ENCODE measurements at regions of chr4 and their contacts with region 1.

Region 1: GRCh38 chr4:781493-782216 is 44.3 kb downstream of the CPLX1 start:
- DNase-seq: peak; percentile 96 to 99 (median 98)
- ATAC-seq: peak; percentile 96
- H3K4me3 ChIP-seq: peak overlapping the region; percentile 83
- H3K4me3 Mint-ChIP-seq: peak overlapping the region; percentile 84 to 97 (median 90)
- H3K27ac ChIP-seq: peak overlapping the region; percentile 90
- H3K27ac Mint-ChIP-seq: peak overlapping the region; percentile 81 to 98 (median 95)
- H3K4me1 ChIP-seq: peaks cover 29% of the 10 kb centered on the region in 2 donors
- H3K4me1 Mint-ChIP-seq: peaks cover 42 to 62% (median 47%) of the 10 kb centered on the region in 7 donors
- H3K27me3 ChIP-seq: peaks cover 0 to 6% of the 10 kb centered on the region in 2 donors
- H3K27me3 Mint-ChIP-seq: peaks cover 10 to 22% (median 16%) of the 10 kb centered on the region in 5 donors

Region 2: GRCh38 chr4:337143-337931 is 444.3 kb before region 1 on chr4 and contains the start of gene ZNF141:
- CTCF ChIA-PET with region 1: no interaction called
- POLR2A ChIA-PET with region 1: no interaction called
- intact Hi-C with region 1: loop called (anchors 1 to 5 kb)
- DNase-seq: peak; percentile 74 to 95 (median 93)
- ATAC-seq: peak; percentile 93
- H3K4me3 ChIP-seq: peak within 1 kb of the TSS; percentile 91
- H3K4me3 Mint-ChIP-seq: peak within 1 kb of the TSS; percentile 93 to 100 (median 99)
- H3K27ac ChIP-seq: peak within 1 kb of the TSS; percentile 85
- H3K27ac Mint-ChIP-seq: peak within 1 kb of the TSS; percentile 95 to 100 (median 99)
- H3K4me1 ChIP-seq: peaks cover 9 to 10% of the 10 kb centered on the region in 2 donors
- H3K4me1 Mint-ChIP-seq: peaks cover 11 to 46% (median 41%) of the 10 kb centered on the region in 7 donors
- H3K27me3 ChIP-seq: no peaks in the 10 kb centered on the region
- H3K27me3 Mint-ChIP-seq: peaks cover 0 to 6% (median 0%) of the 10 kb centered on the region in 5 donors
- total RNA-seq, gene ZNF141: 19.7 to 76.1 (median 29.0) TPM

Region 3: DNA sequence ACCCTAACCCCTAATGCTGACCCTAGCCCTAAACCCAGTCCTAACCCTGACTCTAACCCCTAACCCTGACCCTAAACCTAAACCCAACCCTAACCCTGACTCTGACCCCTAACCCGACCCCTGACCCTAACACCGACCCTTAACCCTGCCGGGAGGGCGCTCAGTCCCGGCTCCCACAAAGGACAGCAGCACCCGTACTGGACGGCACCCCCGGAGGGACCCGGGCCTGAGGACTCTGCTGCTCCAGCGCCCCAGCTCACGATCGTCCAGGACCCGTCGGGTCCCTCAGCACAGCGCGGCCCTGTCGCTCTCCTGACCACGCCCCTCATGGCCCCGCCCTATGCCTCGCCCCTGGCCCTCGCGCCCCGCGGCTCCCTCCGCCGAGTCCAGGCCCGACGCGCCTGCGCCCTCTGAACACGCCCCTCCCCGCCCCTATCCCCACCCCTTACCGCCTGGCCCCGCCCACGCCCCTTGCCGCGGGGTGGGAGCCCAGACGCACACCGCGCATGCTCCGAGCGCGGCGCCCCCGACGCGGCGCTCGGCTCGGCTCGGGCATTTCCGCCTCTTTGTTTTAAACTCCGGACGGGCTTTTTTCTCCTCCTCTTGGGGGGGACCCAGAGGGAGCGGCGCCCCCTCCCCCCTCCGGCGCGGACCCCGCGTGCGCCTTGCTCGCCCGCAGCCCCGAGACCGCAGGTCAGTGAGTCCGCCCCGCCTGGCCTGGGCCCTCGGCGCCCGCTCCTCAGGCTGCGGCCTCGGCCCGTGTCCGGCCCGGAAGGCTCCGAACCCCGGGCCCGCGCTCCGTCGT is 76.2 kb before region 1 on chr4 and contains the start of gene PCGF3:
- CTCF ChIA-PET with region 1: no interaction called
- POLR2A ChIA-PET with region 1: interaction called, 3 read pairs
- intact Hi-C with region 1: loop called (anchors 1 kb)
- DNase-seq: peak; percentile 89 to 99 (median 92)
- ATAC-seq: peak; percentile 99
- H3K4me3 ChIP-seq: peak within 1 kb of the TSS; percentile 84
- H3K4me3 Mint-ChIP-seq: peak within 1 kb of the TSS; percentile 68 to 96 (median 83)
- H3K27ac ChIP-seq: peak within 1 kb of the TSS; percentile 96
- H3K27ac Mint-ChIP-seq: peak within 1 kb of the TSS; percentile 40 to 93 (median 59)
- H3K4me1 ChIP-seq: peaks cover 9 to 11% of the 10 kb centered on the region in 2 donors
- H3K4me1 Mint-ChIP-seq: peaks cover 21 to 30% (median 23%) of the 10 kb centered on the region in 7 donors
- H3K27me3 ChIP-seq: no peaks in the 10 kb centered on the region
- H3K27me3 Mint-ChIP-seq: no peaks in the 10 kb centered on the region
- total RNA-seq, gene PCGF3: 32.7 to 66.8 (median 42.3) TPM

Region 4: DNA sequence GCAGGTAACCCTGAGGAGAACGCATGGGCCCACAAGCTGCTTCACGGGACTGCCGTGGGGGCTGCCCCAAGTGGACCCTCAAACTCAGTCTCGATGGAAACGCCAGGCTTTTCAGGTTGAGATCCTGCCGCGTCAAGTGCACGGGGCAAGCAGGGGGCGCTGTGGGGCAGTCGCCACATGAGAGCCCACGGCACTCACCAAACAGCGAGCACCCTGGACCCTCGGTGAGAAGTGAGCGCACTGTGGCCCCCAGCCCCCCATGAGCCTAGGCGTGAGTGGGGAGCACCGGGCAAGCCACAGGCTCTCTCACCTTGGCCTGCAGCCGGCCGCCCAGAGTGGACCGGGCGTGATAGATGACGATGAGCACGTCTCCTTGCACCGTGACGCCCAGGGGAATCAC is 95.1 kb after region 1 on chr4:
- CTCF ChIA-PET with region 1: no interaction called
- POLR2A ChIA-PET with region 1: no interaction called
- intact Hi-C with region 1: loop called (anchors 1 to 5 kb)
- DNase-seq: no peak
- ATAC-seq: no peak
- H3K4me3 ChIP-seq: no peak overlapping the region
- H3K4me3 Mint-ChIP-seq: peak overlapping the region in 1 of 10 donors; percentile 34
- H3K27ac ChIP-seq: no peak overlapping the region
- H3K27ac Mint-ChIP-seq: peak overlapping the region in 3 of 9 donors; percentile 28 to 76 (median 38)
- H3K4me1 ChIP-seq: peaks cover 15 to 21% of the 10 kb centered on the region in 2 donors
- H3K4me1 Mint-ChIP-seq: peaks cover 22 to 35% (median 28%) of the 10 kb centered on the region in 7 donors
- H3K27me3 ChIP-seq: no peaks in the 10 kb centered on the region
- H3K27me3 Mint-ChIP-seq: no peaks in the 10 kb centered on the region

Region 5: DNA sequence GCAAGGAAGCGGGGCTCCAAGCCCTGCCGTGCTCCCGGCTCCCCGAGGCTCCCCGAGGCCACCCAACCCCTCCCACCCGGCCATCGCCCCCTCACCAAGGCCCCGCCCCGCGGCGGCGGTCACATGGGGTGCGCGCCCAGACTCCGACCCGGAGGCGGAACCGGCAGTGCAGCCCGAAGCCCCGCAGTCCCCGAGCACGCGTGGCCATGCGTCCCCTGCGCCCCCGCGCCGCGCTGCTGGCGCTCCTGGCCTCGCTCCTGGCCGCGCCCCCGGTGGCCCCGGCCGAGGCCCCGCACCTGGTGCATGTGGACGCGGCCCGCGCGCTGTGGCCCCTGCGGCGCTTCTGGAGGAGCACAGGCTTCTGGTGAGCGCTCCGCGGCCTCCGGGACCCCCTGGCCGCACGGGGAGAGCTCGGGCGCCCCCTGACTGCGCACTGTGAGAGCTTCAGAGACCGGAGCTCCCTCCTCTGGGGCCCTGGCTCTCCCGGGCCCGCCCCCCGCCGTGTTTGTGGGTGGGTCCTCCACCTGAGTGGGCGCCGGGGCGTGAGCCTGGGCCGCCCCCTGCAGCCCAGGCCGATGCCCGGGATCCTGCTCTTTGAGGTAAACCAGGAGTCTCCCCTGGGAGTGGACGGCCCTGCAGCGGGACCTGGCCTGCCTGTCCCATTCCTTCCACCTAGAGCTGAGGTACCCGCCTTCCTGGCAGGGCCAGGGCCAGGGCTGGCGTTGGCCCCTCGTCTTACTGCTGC is 205.4 kb after region 1 on chr4 and contains the start of gene IDUA:
- CTCF ChIA-PET with region 1: interaction called, 4 read pairs
- POLR2A ChIA-PET with region 1: interaction called, 3 read pairs
- intact Hi-C with region 1: loop called (anchors 1 to 2 kb)
- DNase-seq: peak; percentile 75 to 90 (median 84)
- ATAC-seq: peak; percentile 93
- H3K4me3 ChIP-seq: peak within 1 kb of the TSS; percentile 82
- H3K4me3 Mint-ChIP-seq: peak within 1 kb of the TSS; percentile 87 to 95 (median 92)
- H3K27ac ChIP-seq: peak within 1 kb of the TSS; percentile 78
- H3K27ac Mint-ChIP-seq: peak within 1 kb of the TSS; percentile 76 to 90 (median 85)
- H3K4me1 ChIP-seq: peaks cover 19 to 21% of the 10 kb centered on the region in 2 donors
- H3K4me1 Mint-ChIP-seq: peaks cover 11 to 34% (median 22%) of the 10 kb centered on the region in 7 donors
- H3K27me3 ChIP-seq: no peaks in the 10 kb centered on the region
- H3K27me3 Mint-ChIP-seq: no peaks in the 10 kb centered on the region
- total RNA-seq, gene IDUA: 42.3 to 72.4 (median 65.8) TPM

Region 6: DNA sequence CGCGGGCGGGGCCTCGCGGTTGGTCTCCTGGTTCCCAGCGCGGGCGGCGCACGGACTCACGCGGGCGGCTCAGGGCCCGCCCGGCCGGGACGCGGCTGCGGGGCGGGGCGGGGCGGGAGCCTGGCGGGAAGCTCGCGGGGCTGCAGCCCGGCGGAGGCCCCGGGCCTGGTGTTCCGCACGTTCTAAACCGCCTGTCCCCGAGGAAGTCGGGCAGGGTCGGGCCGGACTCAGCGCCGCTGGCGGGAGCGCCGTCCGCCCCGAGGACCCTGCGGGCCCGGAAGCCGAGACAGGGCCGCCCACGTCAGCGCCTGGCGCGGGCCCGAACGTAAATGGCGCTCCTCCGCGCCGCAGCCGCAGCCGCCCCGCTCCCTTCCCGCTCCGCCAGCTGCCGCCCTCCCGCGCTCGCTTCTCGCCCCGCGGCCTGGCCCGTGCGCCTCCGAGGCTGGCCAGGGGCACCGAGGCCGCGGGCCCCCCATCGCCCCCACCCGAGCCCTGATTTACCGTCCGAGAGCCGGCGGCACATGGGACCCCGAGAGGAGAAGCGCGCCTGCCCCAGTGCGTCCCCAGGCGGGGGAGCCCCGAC is 467.6 kb after region 1 on chr4:
- CTCF ChIA-PET with region 1: no interaction called
- POLR2A ChIA-PET with region 1: no interaction called
- intact Hi-C with region 1: loop called (anchors 1 to 2 kb)
- DNase-seq: peak; percentile 79 to 92 (median 90)
- ATAC-seq: peak; percentile 80
- H3K4me3 ChIP-seq: peak overlapping the region; percentile 82
- H3K4me3 Mint-ChIP-seq: peak overlapping the region; percentile 80 to 93 (median 88)
- H3K27ac ChIP-seq: peak overlapping the region; percentile 97
- H3K27ac Mint-ChIP-seq: peak overlapping the region; percentile 90 to 96 (median 94)
- H3K4me1 ChIP-seq: peaks cover 51 to 66% of the 10 kb centered on the region in 2 donors
- H3K4me1 Mint-ChIP-seq: peaks cover 50 to 74% (median 65%) of the 10 kb centered on the region in 7 donors
- H3K27me3 ChIP-seq: no peaks in the 10 kb centered on the region
- H3K27me3 Mint-ChIP-seq: no peaks in the 10 kb centered on the region

Measured in naive thymus-derived CD4-positive, alpha-beta T cell (primary cell).